Activated naive CD4-positive, alpha-beta T cell treated with anti-CD3 and anti-CD28 coated beads for 36 hours (primary cell): ENCODE measurements at regions of chr19 and their contacts with region 1.

Region 1: GRCh38 chr19:3176603-3177501 is 1.7 kb upstream of the S1PR4 start:
- DNase-seq: peak; percentile 84
- H3K4me3 Mint-ChIP-seq: peak overlapping the region; percentile 68
- H3K27ac Mint-ChIP-seq: peak overlapping the region; percentile 84
- H3K4me1 Mint-ChIP-seq: peaks cover 20% of the 10 kb centered on the region
- H3K27me3 Mint-ChIP-seq: no peaks in the 10 kb centered on the region

Region 2: DNA sequence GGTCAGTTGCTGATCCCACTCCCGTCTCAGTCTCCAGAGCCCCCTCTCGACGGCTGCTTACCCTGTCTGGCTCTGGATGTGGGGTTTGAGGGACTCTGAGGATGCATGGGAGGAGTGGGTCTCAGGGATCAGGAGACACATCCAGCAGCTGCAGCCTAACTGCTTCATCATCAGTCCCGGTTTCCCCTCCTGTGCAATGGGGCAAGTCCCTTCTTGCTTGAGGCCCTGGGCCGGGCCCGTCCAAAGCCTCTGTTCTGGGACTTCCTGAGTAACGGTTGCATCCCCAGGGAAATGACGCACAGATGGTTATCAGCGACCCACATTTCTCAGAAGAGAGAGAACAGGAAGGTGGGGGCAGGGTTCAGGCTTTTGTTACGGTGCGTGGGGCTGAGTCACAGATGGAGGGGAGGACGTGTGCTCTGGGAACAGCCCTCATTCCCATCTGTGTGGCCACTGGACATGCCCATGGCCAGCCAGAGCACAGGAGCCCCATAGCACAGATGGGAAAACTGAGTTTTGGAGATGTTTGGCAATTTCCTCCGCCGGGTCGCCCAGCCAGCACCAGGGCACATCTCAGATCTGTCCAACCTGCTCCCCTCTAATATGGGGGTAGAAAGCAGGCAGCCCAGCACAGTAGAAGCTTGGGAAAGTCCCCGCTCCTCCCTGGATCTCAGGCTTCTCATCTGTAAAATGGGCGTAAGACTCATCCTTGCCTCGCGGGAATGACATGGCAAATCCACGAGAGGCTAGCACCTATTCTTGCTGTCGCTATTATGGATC is 21.7 kb before region 1 on chr19:
- CTCF ChIA-PET with region 1: no interaction called
- intact Hi-C with region 1: loop called (anchors 1 kb)
- DNase-seq: peak; percentile 97
- H3K4me3 Mint-ChIP-seq: no peak overlapping the region
- H3K27ac Mint-ChIP-seq: no peak overlapping the region
- H3K4me1 Mint-ChIP-seq: no peaks in the 10 kb centered on the region
- H3K27me3 Mint-ChIP-seq: no peaks in the 10 kb centered on the region

Region 3: GRCh38 chr19:3193256-3194105 is 16.6 kb after region 1 on chr19:
- CTCF ChIA-PET with region 1: no interaction called
- intact Hi-C with region 1: no loop called
- DNase-seq: no peak
- H3K4me3 Mint-ChIP-seq: no peak overlapping the region
- H3K27ac Mint-ChIP-seq: no peak overlapping the region
- H3K4me1 Mint-ChIP-seq: peaks cover 13% of the 10 kb centered on the region
- H3K27me3 Mint-ChIP-seq: no peaks in the 10 kb centered on the region